ENCODE measurements at regions of chr13 and their contacts with region 1.

Region 1: DNA sequence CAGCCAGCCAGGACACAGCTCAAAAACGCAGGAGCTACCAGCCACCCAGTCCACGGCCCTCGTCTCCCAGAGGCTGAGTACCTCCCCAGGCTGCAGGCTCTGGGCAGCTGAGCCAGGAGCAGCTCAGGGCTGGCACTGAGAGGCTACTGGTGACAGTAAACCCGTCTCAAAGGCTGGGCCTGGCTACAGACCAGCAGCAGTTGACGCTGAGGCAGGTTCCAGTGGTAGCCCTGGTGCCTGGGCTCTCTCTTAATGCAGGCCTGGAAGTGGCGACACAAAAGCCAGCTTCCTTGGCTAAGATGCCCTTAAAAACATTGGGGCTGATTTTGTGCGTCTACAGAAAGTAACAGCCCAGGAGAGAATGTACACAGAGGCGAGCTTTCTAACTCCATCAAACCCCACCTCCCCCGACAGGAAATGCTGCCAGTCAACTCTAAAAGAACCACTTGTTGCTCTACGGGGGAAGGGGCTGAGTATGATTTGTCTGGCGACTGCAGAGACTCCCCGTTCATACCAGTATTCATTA is 126.3 kb downstream of the STK24 start:
- DNase-seq: no peak

Region 2: DNA sequence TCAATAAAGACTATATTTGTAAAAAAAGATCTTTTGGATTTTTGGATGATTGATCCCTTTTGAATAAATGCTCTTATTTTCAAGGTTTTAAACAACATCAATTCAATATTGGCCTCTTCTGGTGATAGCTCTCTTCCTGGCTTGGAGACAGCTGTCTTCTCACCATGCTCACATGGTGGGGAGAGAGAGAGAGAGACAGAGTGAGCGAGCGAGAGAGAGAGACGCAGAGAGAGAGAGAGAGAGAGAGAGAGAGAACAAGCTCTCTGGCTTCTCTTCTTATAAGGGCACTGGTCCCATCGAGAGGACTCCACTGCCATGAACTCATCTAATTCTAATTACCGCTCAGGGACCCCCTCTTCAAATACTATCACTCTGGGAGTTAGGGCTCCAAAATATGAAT is 339.9 kb before region 1 on chr13:
- intact Hi-C with region 1: no loop called
- DNase-seq: no peak

Region 3: DNA sequence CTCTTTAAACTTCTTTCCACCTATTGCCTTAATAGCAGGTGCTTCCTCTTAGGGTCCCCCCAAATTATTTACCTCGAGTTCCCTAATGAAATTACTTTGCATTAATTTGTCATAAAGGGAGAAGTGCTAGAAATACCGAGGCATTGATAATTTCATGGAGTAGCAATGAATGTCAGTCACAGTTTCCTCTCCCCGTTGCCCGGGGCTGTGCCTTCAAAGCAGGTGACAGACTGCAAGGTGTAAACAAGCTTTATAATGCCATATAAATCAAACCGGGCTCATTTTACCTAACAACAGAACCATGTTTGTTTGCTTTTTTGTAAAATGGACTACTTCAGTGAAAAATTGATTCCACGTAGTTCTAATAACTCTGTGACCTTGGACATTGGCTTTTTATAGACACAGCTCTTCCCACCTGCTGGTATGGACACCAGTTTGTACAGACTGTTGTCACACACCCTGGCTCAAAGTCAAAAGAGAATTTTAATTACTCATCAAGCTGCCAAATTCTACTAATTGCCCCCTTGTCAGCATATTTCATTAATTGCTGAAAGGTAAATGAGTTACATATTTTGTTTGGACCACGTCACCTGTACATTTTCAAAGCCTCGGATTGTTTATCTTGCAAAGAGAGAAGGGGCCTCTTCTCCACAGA is 44.8 kb before region 1 on chr13:
- intact Hi-C with region 1: loop called in 1 of 2 experiments (anchors 1 kb)
- DNase-seq: no peak

Measured in posterior vena cava (tissue), 2 donors.